Left colon (tissue), 2 donors: ENCODE measurements at regions of chr12 and their contacts with region 1.

Region 1: GRCh38 chr12:69639400-69640016 is 28.8 kb upstream of the LRRC10 start:
- DNase-seq: peak; percentile 32 to 67
- ATAC-seq: peak; percentile 89

Region 2: DNA sequence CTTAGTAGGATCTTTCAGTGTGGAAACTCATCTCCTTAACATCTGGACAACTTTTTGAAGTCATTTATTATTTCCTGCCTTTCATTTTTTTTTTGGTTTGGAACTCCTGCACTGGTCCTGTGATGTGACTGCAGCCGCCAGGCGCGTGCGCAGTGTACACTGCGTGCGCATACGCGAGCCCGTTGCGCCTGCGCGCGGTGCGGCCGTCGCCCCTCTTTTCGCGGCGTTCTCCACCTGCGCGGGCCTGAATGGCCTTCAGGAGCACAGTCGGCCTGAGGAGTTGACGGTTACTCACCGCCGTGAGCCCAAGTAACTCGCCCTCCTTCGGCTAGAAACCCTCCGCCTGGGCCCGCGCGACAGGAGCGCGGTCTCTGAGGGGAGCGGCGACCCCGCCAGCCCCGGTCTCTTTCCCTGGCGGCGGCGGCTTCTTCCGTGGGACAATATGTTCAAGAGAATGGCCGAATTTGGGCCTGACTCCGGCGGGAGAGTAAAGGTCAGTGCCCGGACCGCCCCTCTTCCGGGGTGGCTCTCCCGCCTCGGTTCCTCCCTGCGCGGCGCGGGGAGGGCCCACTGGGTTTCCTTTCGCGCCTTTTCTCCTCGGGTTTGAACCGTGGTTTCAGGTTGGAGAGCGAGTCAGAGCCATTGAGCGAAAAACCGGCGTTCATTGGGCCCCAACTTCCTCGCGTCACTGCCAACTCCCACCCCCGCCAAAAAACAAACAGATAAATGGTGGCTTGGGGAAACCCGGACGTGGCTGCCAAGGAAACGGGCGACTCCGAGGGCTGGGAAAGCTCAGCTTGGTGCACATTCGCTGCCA is 279.8 kb before region 1 on chr12 and contains the start of gene YEATS4:
- intact Hi-C with region 1: loop called in 1 of 2 experiments (anchors 5 kb)
- DNase-seq: peak; percentile 88
- ATAC-seq: peak; percentile 86
- total RNA-seq, gene YEATS4: 7.3 to 11.6 TPM

Region 3: DNA sequence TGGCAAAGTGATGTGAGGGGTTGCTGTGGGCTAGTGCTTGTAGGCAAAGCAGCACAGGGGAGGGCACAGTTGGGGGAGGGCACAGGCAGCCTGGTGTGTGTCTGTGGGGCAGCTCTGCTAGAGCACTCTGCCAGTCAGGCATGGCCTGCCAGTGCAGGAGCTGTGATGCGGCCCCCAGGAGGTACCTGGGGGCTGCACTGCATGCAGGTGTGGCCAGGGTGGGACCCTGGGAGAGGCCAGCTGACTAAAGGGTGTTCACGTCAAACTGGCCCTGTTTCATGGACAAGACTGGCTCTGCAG is 115.2 kb before region 1 on chr12:
- intact Hi-C with region 1: no loop called
- DNase-seq: no peak
- ATAC-seq: no peak

Region 4: GRCh38 chr12:69534389-69534822 is 105.1 kb before region 1 on chr12:
- intact Hi-C with region 1: no loop called
- DNase-seq: peak in 1 of 2 donors; percentile 34
- ATAC-seq: peak; percentile 50

Region 5: GRCh38 chr12:69885658-69886057 is 246.2 kb after region 1 on chr12:
- intact Hi-C with region 1: no loop called
- DNase-seq: no peak
- ATAC-seq: no peak